Activated CD4-positive, alpha-beta T cell treated with anti-CD3 and anti-CD28 coated beads for 36 hours (primary cell): ENCODE measurements at regions of chr13 and their contacts with region 1.

Region 1: GRCh38 chr13:67328895-67329294 is 98.8 kb upstream of the PCDH9 start:
- DNase-seq: no peak
- ATAC-seq: no peak
- H3K4me3 Mint-ChIP-seq: no peak overlapping the region
- H3K27ac Mint-ChIP-seq: no peak overlapping the region
- H3K4me1 Mint-ChIP-seq: no peaks in the 10 kb centered on the region
- H3K27me3 Mint-ChIP-seq: no peaks in the 10 kb centered on the region

Region 2: DNA sequence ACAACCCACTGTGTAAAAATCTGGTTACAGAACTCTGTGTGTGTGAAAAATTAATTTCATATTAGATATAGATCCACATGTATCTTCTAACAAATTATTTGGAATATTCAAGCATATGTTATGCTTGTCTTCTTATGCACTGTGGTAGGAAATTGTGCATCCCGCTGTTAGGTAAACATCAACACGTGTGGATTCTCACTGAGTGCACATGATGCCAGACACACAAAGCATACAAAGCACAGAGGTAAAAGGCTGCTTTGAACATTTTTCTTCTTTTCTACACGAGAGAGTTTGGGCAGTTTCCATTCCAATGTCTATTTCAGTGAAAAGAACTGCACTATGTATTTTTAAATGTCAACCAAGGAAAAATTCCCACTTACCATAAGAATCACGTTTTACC is 453.6 kb before region 1 on chr13:
- CTCF ChIA-PET with region 1: no interaction called
- POLR2A ChIA-PET with region 1: no interaction called
- intact Hi-C with region 1: no loop called
- DNase-seq: no peak
- ATAC-seq: no peak
- H3K4me3 Mint-ChIP-seq: no peak overlapping the region
- H3K27ac Mint-ChIP-seq: no peak overlapping the region
- H3K4me1 Mint-ChIP-seq: no peaks in the 10 kb centered on the region
- H3K27me3 Mint-ChIP-seq: no peaks in the 10 kb centered on the region

Region 3: DNA sequence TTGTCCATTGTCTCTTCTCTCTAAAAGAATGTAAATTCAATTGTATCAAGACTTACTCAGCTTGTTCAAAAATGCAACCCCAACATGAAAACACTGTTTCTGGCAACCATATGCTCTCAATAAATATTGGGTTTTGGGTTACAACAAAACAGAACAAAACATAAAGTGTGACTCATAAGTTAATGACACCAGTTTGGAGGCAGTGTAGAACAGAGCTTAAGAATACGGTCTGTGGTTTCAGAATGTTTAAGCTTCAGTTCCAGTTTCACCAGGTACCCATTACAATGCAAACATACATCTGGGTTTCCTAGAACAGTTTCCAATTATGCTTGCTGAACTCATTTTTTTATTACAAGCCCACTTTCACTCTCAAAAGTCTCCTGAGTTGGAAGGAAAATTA is 187.0 kb after region 1 on chr13:
- CTCF ChIA-PET with region 1: no interaction called
- POLR2A ChIA-PET with region 1: no interaction called
- intact Hi-C with region 1: loop called in 1 of 2 experiments (anchors 10 kb)
- DNase-seq: no peak
- ATAC-seq: no peak
- H3K4me3 Mint-ChIP-seq: no peak overlapping the region
- H3K27ac Mint-ChIP-seq: no peak overlapping the region
- H3K4me1 Mint-ChIP-seq: no peaks in the 10 kb centered on the region
- H3K27me3 Mint-ChIP-seq: no peaks in the 10 kb centered on the region